HEK293T (cell line): ENCODE measurements at regions of chr5 and their contacts with region 1.

Region 1: DNA sequence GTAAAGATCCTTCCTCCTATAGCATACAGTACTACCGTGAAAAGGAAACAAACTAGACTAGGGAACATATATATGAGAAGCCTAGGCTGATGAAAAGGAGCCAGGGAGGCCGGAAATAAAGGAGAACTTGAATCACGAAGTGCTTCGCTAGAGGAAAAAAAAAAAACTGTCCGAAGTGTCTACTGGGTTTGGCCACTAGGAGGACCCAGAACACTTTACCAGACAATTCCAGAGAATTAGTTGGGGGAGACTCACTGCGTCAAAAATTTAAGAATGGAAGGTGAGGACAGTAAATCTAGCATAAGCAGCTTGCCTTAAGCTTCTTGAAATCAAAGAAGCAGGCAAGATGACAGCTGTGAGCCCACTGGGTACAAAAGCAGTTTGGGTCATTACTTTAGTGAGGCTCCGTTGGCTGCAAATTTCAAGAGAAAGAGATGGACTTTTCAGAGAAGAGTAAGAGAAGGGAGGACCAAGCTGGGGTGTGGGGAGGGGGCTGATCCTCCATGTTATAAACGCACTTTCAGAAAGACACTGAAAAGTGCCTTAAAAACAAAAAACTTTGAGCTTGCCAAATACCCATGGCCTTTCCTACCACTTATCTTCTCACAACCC is 47.4 kb downstream of the P4HA2 start:
- DNase-seq: peak; percentile 62

Region 2: DNA sequence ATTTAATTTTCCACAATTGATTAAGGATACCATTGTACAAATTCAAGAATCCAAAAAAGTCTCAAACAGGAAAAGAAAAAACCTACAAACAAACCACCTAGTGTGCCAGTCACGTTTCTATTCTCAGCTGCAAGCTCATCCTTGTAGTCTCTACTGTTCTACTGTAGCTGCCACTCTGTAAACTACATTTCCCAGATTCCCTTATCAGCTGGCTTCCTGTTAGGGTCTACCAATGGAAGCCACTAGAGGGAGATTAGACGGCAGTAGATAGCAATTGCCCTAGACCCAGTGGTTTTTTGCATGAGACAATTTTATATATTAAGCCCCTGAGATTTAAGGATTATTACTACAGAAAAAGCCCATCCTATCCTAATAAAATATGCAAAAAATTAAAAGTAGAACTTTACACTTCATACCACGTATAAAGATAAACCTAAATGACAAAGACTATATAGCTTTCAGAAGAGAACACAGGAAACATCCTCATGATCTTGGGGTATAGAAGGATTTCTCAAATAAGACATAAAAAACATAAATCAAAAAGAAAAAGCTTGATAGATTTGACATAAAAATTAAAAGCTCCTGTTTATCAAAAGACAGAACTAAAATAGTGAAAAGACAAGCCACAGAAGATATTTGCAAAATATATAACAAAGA is 10.0 kb after region 1 on chr5:
- CTCF ChIA-PET with region 1: interaction called, 13 read pairs
- POLR2A ChIA-PET with region 1: no interaction called
- DNase-seq: peak; percentile 68

Region 3: GRCh38 chr5:132886064-132886823 is 706.0 kb after region 1 on chr5:
- CTCF ChIA-PET with region 1: interaction called, 10 read pairs
- POLR2A ChIA-PET with region 1: no interaction called
- DNase-seq: no peak